ENCODE measurements at regions of chr1 and their contacts with region 1.

Region 1: DNA sequence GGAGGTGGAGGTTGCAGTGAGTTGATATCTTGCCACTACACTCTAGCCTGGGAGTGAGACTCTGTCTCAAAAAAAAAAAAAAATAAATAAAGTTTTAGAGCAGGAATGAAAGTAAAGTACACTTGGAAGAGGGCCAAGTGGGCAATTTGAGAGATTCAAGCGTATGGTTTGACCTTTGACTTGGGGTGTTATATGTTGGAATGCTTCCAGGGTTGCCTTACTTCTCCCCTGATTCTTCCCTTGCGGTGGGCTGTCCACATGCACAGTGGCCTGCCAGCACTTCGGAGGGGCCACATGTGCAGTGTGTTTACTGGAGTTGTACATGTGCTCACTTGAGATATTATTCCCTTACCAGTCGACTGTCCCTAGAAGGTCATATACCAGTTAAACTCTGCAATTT is 295.5 kb upstream of the PROX1 start:
- DNase-seq: no peak
- ATAC-seq: no peak
- H3K4me3 ChIP-seq: no peak overlapping the region
- H3K27ac ChIP-seq: no peak overlapping the region
- H3K4me1 ChIP-seq: no peaks in the 10 kb centered on the region
- H3K27me3 ChIP-seq: no peaks in the 10 kb centered on the region
- CTCF ChIP-seq: no peak
- POLR2A ChIP-seq: no peak
- RAD21 ChIP-seq: no peak

Region 2: GRCh38 chr1:213678348-213678747 is 14.0 kb before region 1 on chr1:
- CTCF ChIA-PET with region 1: no interaction called
- POLR2A ChIA-PET with region 1: no interaction called
- dilution Hi-C with region 1: no loop called
- in situ Hi-C with region 1: no loop called
- intact Hi-C with region 1: loop called (anchors 1 kb)
- DNase-seq: no peak
- ATAC-seq: no peak
- H3K4me3 ChIP-seq: no peak overlapping the region
- H3K27ac ChIP-seq: no peak overlapping the region
- H3K4me1 ChIP-seq: no peaks in the 10 kb centered on the region
- H3K27me3 ChIP-seq: no peaks in the 10 kb centered on the region
- CTCF ChIP-seq: no peak
- POLR2A ChIP-seq: no peak
- RAD21 ChIP-seq: no peak

Region 3: GRCh38 chr1:213793482-213794067 is 101.3 kb after region 1 on chr1:
- CTCF ChIA-PET with region 1: no interaction called
- POLR2A ChIA-PET with region 1: no interaction called
- dilution Hi-C with region 1: no loop called
- in situ Hi-C with region 1: no loop called
- intact Hi-C with region 1: no loop called
- DNase-seq: no peak
- ATAC-seq: no peak
- H3K4me3 ChIP-seq: no peak overlapping the region
- H3K27ac ChIP-seq: no peak overlapping the region
- H3K4me1 ChIP-seq: no peaks in the 10 kb centered on the region
- H3K27me3 ChIP-seq: no peaks in the 10 kb centered on the region
- CTCF ChIP-seq: no peak
- POLR2A ChIP-seq: no peak
- RAD21 ChIP-seq: no peak

Measured in IMR-90 (cell line).